ENCODE measurements at regions of chr6 and their contacts with region 1.

Region 1: DNA sequence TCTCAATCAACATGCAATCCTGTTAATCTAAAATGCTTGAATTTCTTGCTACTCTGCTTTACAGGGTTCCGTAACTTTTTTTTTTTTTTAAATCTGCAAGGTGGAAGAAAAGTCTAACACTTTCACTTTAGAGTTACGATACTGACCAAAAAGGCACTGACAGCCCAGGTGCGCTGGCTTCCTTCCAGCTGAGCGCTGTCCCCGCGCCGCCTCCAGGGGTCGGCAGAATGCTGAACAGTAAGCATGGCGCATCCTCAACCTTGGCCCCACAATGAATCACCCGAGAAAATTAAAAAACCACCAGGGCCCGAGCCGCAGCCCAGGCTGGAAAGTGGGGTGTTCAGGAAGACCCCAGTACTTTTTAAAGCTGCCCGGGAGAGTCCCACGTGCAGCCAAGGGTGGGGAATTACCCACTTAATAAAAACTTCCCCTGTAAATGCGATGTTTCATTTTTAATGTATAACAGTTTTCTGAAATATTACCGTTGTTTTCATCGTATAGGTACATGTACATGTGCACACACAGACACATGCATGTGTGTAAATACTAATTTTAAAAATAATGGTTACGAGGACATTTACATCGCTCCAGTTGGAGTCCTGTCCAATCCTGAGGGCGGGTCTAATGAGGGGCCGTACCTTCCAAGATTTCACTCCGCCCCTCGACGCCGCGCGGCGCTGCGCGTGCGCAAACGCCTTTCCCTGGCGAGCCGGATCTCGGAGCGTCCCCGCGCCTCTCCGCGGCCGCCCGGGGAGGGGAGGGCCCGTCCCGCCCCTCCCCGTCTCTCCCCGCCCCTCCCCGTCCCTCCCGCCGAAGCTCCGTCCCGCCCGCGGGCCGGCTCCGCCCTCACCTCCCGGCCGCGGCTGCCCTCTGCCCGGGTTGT is at the start of gene GINM1:
- DNase-seq: peak; percentile 97
- H3K4me3 Mint-ChIP-seq: peak within 1 kb of the TSS; percentile 91
- H3K27ac Mint-ChIP-seq: peak within 1 kb of the TSS; percentile 82
- H3K4me1 Mint-ChIP-seq: peaks cover 15% of the 10 kb centered on the region
- H3K27me3 Mint-ChIP-seq: peaks cover 2% of the 10 kb centered on the region
- total RNA-seq, gene GINM1: 15.6 to 16.0 TPM

Region 2: DNA sequence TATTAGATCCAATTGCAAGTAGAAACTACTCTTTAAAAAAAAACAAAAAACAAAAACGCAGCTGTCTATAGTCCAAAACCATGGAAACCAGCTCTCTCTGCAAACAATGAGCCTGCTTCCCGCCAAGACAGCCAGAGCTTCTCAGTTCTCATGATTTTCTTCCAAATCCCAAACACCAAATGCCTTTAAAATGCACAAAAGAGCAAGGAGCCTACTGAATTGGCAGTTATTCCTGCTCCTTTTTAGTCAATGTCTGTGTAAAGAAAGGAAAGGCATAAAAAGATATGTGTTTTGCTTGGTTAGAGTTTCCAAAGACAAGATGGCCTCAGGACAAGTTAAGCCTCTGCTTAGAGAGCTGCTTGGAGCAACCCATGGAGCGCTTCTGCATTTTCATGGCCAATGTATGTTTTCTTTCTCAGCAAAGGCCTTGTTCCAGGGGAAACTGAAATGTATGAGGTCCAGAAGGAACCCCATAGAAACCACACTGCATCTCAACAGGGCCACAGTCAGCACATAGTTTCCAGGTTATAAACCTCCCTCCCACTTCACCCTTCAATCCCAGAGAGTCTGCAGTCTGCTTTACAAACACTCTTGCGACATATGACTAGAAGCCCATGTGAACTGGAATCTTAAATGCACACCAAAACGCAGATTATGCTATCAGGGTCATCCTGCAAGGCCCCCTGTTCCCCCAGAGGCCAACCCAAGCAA is 457.6 kb before region 1 on chr6:
- CTCF ChIA-PET with region 1: no interaction called
- POLR2A ChIA-PET with region 1: no interaction called
- intact Hi-C with region 1: no loop called
- DNase-seq: no peak
- H3K4me3 Mint-ChIP-seq: no peak overlapping the region
- H3K27ac Mint-ChIP-seq: no peak overlapping the region
- H3K4me1 Mint-ChIP-seq: peaks cover 31% of the 10 kb centered on the region
- H3K27me3 Mint-ChIP-seq: no peaks in the 10 kb centered on the region

Region 3: GRCh38 chr6:149484733-149485700 is 80.8 kb before region 1 on chr6 and contains the start of gene ZC3H12D:
- CTCF ChIA-PET with region 1: no interaction called
- POLR2A ChIA-PET with region 1: interaction called, 3 read pairs
- intact Hi-C with region 1: loop called (anchors 5 kb)
- DNase-seq: peak; percentile 92
- H3K4me3 Mint-ChIP-seq: peak within 1 kb of the TSS; percentile 98
- H3K27ac Mint-ChIP-seq: peak within 1 kb of the TSS; percentile 98
- H3K4me1 Mint-ChIP-seq: peaks cover 44% of the 10 kb centered on the region
- H3K27me3 Mint-ChIP-seq: no peaks in the 10 kb centered on the region
- total RNA-seq, gene ZC3H12D: 124 to 129 TPM

Region 4: DNA sequence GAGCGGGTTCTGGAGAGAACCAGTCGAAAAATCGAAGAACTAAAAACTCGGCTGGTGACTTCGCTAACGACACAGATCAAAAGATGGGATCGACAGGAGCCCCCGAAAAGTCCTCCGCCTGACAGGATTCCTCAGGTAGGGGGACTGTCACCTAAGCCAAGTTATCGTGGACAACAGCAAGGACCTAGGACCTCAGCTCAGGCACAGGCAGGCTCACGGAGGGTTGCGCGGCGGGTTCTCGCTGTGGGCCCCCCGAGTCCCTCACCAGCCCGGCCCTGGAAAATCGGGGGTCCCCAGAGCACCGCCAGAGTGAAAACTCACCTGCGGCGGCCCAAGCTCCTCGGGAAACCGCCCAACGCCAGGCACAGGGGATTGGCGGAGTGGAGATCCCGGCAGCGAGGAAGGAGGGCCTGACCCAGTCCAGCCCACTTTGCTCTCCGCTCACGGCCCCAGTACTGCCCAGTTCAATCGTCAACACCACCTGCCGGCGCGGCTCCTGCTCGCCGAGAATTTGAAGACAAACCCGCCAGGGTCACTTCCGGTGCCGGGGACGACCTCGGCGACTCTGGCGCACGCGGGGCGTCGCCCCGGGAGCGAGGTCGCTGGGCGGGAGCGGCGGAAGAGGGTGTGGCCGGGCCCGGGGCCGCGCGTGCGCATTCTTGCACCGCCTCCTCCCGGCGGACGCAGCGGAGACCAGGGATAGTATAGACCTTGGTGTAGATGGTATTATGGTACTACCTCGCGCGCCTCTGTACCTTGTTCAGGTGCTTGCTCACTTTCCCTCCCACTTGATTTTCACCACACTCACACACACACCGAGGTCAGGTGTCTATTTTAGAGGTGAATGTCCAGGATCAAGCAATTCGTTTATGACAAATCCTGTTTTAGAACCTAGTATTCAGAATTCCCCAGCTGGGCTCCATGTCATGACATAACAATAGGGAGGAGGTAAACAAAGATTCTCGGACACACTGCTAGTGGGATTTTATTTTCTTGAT is 82.7 kb after region 1 on chr6 and contains the start of gene KATNA1:
- CTCF ChIA-PET with region 1: no interaction called
- POLR2A ChIA-PET with region 1: no interaction called
- intact Hi-C with region 1: loop called (anchors 1 kb)
- DNase-seq: peak; percentile 94
- H3K4me3 Mint-ChIP-seq: peak within 1 kb of the TSS; percentile 79
- H3K27ac Mint-ChIP-seq: peak within 1 kb of the TSS; percentile 81
- H3K4me1 Mint-ChIP-seq: peaks cover 22% of the 10 kb centered on the region
- H3K27me3 Mint-ChIP-seq: no peaks in the 10 kb centered on the region
- total RNA-seq, gene KATNA1: 22.3 to 22.8 TPM

Region 5: DNA sequence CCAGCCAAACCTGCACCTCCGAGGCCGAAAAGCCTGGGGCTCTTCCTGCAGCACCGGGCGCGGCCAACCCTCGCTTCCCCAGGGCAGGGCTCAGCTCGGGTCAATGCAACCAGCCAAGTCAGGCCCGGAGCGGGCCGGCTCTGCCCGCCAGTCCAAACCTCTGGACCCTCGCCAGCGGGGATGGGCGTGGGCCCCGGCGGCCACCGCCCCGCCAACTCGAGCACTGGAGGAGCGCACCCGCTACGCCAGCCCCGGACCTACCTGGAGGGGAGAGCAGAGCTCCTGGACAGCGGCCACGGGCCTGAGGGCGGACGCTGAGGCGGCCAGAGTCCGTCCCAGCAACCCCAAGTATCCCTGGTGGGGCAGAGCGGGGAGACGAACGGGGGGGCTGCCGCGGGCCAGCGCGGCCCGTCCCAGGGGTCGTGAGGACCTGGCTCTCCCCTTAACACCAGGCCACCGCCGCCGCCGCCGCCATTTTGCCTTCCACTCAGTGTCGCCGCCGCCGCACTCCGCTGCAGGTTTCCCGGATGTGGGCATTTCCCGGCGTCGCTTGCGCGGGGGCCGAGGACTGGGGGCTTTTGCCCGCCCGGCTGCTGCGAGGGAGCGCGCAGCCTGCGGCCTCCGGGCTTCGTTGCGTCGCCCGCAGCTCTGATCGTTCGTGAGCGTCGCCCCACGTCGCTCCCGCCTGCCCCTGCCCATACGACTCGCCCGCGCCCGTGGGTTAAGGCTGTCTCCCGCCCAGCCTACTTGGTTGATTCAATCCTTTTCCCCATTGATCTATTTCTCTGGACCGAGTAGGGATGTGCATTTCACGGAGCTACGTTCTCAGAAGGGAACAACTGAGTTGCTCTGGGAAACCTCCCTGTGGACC is 152.1 kb after region 1 on chr6 and contains the start of gene LATS1:
- CTCF ChIA-PET with region 1: interaction called, 4 read pairs
- POLR2A ChIA-PET with region 1: interaction called, 11 read pairs
- intact Hi-C with region 1: loop called (anchors 1 kb)
- DNase-seq: peak; percentile 95
- H3K4me3 Mint-ChIP-seq: peak within 1 kb of the TSS; percentile 92
- H3K27ac Mint-ChIP-seq: peak within 1 kb of the TSS; percentile 96
- H3K4me1 Mint-ChIP-seq: peaks cover 31% of the 10 kb centered on the region
- H3K27me3 Mint-ChIP-seq: no peaks in the 10 kb centered on the region
- total RNA-seq, gene LATS1: 19.1 to 20.1 TPM

Region 6: GRCh38 chr6:149863697-149864577 is 298.2 kb after region 1 on chr6 and contains the start of gene LRP11:
- CTCF ChIA-PET with region 1: no interaction called
- POLR2A ChIA-PET with region 1: no interaction called
- intact Hi-C with region 1: loop called (anchors 1 kb)
- DNase-seq: peak; percentile 88
- H3K4me3 Mint-ChIP-seq: peak within 1 kb of the TSS; percentile 81
- H3K27ac Mint-ChIP-seq: no peak within 1 kb of the TSS
- H3K4me1 Mint-ChIP-seq: peaks cover 19% of the 10 kb centered on the region
- H3K27me3 Mint-ChIP-seq: peaks cover 2% of the 10 kb centered on the region
- total RNA-seq, gene LRP11: 6.7 to 7.2 TPM

Region 7: DNA sequence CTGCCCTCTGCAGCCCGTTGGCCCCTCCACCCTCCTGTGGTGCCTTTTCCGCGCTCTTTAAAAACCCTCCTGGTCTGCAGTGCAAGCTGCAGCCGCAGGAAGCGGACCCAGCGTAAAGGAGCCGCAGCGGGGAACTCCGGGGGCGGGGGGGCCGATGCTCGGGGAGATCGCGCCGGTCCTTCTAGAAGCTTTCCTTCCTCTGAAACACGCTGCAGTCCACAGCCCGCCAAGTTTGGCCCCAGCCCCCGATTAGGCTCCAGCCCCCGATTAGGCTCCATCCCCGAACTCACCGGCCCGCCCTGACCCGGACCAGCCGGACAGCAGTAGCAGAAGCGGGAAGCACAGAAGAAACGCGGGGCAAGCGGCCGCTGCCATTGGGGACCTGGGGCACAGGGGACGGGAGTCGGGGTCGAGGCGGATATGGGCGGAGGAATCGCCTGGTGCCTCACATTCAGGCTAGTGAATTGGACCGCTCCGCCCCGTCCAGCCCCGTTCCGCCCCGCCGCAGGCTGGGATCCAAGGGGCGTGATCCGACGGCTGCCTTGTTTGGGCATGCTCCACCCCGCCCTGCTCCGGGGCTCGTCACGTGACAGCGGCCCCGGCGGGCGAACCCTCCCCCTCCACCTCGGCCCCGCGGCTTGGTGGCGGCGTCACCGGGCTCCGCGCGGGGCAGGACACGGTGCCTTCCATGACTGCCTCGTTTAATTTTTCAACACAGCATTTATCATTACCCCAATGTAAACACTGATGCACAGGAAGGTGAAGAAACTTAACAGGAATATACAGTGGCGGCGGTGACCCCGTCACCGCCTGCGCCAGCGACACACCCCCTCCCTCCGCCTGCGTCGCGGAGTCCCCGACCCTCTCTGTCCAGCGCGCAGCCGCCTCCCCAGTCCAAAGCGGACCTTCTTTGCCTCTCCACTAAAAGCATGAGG is 439.3 kb after region 1 on chr6:
- CTCF ChIA-PET with region 1: no interaction called
- POLR2A ChIA-PET with region 1: no interaction called
- intact Hi-C with region 1: loop called (anchors 10 kb)
- DNase-seq: peak; percentile 94
- H3K4me3 Mint-ChIP-seq: peak overlapping the region; percentile 80
- H3K27ac Mint-ChIP-seq: peak overlapping the region; percentile 42
- H3K4me1 Mint-ChIP-seq: peaks cover 64% of the 10 kb centered on the region
- H3K27me3 Mint-ChIP-seq: peaks cover 27% of the 10 kb centered on the region